SK-N-SH (cell line): ENCODE measurements at regions of chr7 and their contacts with region 1.

Region 1: GRCh38 chr7:83072576-83073517 is 89.8 kb downstream of the PCLO start:
- DNase-seq: peak; percentile 25
- H3K4me3 ChIP-seq: no peak overlapping the region
- H3K27ac ChIP-seq: no peak overlapping the region
- H3K4me1 ChIP-seq: peaks cover 0 to 12% of the 10 kb centered on the region in 2 experiments; a peak in 1 of 4 replicates
- H3K27me3 ChIP-seq: no peaks in the 10 kb centered on the region
- CTCF ChIP-seq: peak; percentile 46
- EP300 ChIP-seq: no peak
- RAD21 ChIP-seq: peak; percentile 79

Region 2: GRCh38 chr7:83060218-83060617 is 12.6 kb before region 1 on chr7:
- CTCF ChIA-PET with region 1: interaction called, 28 read pairs
- POLR2A ChIA-PET with region 1: no interaction called
- DNase-seq: peak; percentile 9
- H3K4me3 ChIP-seq: no peak overlapping the region
- H3K27ac ChIP-seq: peak overlapping the region in 1 of 2 experiments; percentile 73; a peak in 2 of 4 replicates
- H3K4me1 ChIP-seq: peaks cover 0 to 8% of the 10 kb centered on the region in 2 experiments; a peak in 2 of 4 replicates
- H3K27me3 ChIP-seq: no peaks in the 10 kb centered on the region
- CTCF ChIP-seq: no peak
- EP300 ChIP-seq: peak in 1 of 2 experiments; percentile 47; a peak in 1 of 4 replicates
- RAD21 ChIP-seq: no peak

Region 3: GRCh38 chr7:83504330-83504729 is 431.5 kb after region 1 on chr7:
- CTCF ChIA-PET with region 1: no interaction called
- POLR2A ChIA-PET with region 1: no interaction called
- DNase-seq: no peak
- H3K4me3 ChIP-seq: no peak overlapping the region
- H3K27ac ChIP-seq: no peak overlapping the region
- H3K4me1 ChIP-seq: no peaks in the 10 kb centered on the region
- H3K27me3 ChIP-seq: no peaks in the 10 kb centered on the region
- CTCF ChIP-seq: no peak
- EP300 ChIP-seq: no peak
- RAD21 ChIP-seq: no peak